A673 (cell line): ENCODE measurements at regions of chr22 and their contacts with region 1.

Region 1: GRCh38 chr22:36977947-36978660 is 41.1 kb downstream of the TST start:
- DNase-seq: peak; percentile 93
- H3K4me3 ChIP-seq: peak overlapping the region; percentile 44
- H3K27ac ChIP-seq: no peak overlapping the region
- H3K4me1 ChIP-seq: no peaks in the 10 kb centered on the region
- H3K27me3 ChIP-seq: no peaks in the 10 kb centered on the region
- CTCF ChIP-seq: peak; percentile 90

Region 2: GRCh38 chr22:36781656-36782627 is 196.2 kb before region 1 on chr22:
- CTCF ChIA-PET with region 1: interaction called, 3 read pairs
- POLR2A ChIA-PET with region 1: no interaction called
- intact Hi-C with region 1: loop called (anchors 2 kb)
- DNase-seq: peak; percentile 66
- H3K4me3 ChIP-seq: no peak overlapping the region
- H3K27ac ChIP-seq: no peak overlapping the region
- H3K4me1 ChIP-seq: no peaks in the 10 kb centered on the region
- H3K27me3 ChIP-seq: no peaks in the 10 kb centered on the region
- CTCF ChIP-seq: peak; percentile 90

Region 3: GRCh38 chr22:36856121-36856791 is 121.8 kb before region 1 on chr22:
- CTCF ChIA-PET with region 1: interaction called, 4 read pairs
- POLR2A ChIA-PET with region 1: no interaction called
- intact Hi-C with region 1: loop called (anchors 1 kb)
- DNase-seq: peak; percentile 88
- H3K4me3 ChIP-seq: no peak overlapping the region
- H3K27ac ChIP-seq: no peak overlapping the region
- H3K4me1 ChIP-seq: no peaks in the 10 kb centered on the region
- H3K27me3 ChIP-seq: peaks cover 12% of the 10 kb centered on the region
- CTCF ChIP-seq: peak; percentile 100

Region 4: GRCh38 chr22:36873680-36874537 is 104.2 kb before region 1 on chr22:
- CTCF ChIA-PET with region 1: no interaction called
- POLR2A ChIA-PET with region 1: no interaction called
- intact Hi-C with region 1: loop called (anchors 5 kb)
- DNase-seq: peak; percentile 54
- H3K4me3 ChIP-seq: no peak overlapping the region
- H3K27ac ChIP-seq: no peak overlapping the region
- H3K4me1 ChIP-seq: no peaks in the 10 kb centered on the region
- H3K27me3 ChIP-seq: no peaks in the 10 kb centered on the region
- CTCF ChIP-seq: peak; percentile 52

Region 5: DNA sequence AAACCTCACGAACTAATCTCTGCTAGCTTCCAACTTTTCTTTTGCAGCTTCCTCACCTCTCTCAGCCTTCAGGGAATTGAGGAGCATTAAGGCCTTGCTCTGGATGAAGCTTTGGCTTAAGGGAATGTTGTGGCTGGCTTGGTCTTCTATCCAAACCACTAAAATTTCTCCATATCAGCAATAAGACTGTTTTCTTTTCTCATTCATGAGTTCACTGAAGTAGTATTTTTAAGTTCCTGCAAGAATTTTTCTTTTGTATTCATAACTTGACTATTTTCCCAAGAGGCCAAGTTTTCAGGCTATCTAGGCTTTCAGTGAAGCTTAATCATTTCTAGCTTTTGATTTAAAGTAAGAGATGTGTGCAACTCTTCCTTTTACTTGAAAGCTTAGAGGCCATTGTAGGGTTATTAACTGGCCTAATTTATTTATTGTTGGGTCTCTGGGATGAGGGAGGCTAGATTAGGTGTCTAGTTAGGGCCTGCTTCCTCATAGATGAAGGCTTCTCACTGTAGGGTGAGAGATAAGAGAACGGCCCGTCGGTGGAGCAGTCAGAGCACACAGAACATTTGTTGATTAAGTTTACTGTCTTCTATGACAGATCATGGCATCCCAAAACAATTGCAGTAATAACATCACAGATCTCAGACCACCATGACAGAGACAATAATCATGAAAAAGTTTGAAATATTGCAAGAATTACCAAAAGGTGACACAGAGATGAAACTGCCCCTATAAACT is 31.5 kb before region 1 on chr22:
- CTCF ChIA-PET with region 1: no interaction called
- POLR2A ChIA-PET with region 1: no interaction called
- intact Hi-C with region 1: no loop called
- DNase-seq: no peak
- H3K4me3 ChIP-seq: no peak overlapping the region
- H3K27ac ChIP-seq: no peak overlapping the region
- H3K4me1 ChIP-seq: no peaks in the 10 kb centered on the region
- H3K27me3 ChIP-seq: no peaks in the 10 kb centered on the region
- CTCF ChIP-seq: no peak

Region 6: GRCh38 chr22:38398609-38399461 is 1420.7 kb after region 1 on chr22:
- CTCF ChIA-PET with region 1: no interaction called
- POLR2A ChIA-PET with region 1: no interaction called
- intact Hi-C with region 1: no loop called
- DNase-seq: peak; percentile 83
- H3K4me3 ChIP-seq: peak overlapping the region; percentile 64
- H3K27ac ChIP-seq: peak overlapping the region; percentile 72
- H3K4me1 ChIP-seq: peaks cover 44% of the 10 kb centered on the region
- H3K27me3 ChIP-seq: no peaks in the 10 kb centered on the region
- CTCF ChIP-seq: no peak